AG04450 (cell line): ENCODE measurements at regions of chr7 and their contacts with region 1.

Region 1: DNA sequence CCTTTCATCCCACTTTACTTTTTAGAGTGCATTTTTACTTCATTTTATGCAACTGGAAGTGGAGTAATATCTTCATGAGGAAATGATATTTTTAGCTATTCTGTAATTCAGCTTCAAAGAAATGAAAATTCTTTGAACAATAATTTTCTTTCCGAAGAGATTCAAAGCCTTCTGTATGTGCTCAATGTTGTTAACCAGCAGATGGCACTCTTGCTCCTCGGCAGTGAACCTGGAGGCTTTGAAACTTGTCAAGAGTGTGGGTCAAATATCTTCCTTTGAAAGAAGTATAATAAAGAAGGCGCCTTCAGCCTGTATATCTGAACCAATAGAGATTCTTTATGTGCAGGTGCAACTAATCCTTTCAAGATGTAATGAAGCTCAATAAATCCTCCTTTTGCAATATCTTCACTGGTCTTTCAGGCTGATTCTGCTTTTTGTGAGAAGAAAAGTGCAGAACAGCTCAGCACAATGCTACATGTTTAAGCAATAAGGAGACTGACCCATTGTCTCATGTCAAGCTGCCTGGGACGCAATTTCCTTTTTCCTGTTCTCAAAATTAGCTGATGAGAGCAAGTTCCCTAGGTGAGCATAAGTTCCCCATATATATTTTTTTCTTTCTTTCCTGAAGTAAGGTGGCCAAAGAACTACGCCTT is 258.4 kb downstream of the SEMA3A start:
- DNase-seq: peak; percentile 53
- H3K4me3 ChIP-seq: no peak overlapping the region
- H3K27ac ChIP-seq: no peak overlapping the region
- H3K27me3 ChIP-seq: no peaks in the 10 kb centered on the region
- CTCF ChIP-seq: peak; percentile 98

Region 2: GRCh38 chr7:83925860-83926259 is 10.3 kb before region 1 on chr7:
- CTCF ChIA-PET with region 1: interaction called, 13 read pairs
- POLR2A ChIA-PET with region 1: no interaction called
- DNase-seq: no peak
- H3K4me3 ChIP-seq: no peak overlapping the region
- H3K27ac ChIP-seq: no peak overlapping the region
- H3K27me3 ChIP-seq: no peaks in the 10 kb centered on the region
- CTCF ChIP-seq: no peak

Region 3: GRCh38 chr7:83957333-83957732 is 21.2 kb after region 1 on chr7:
- CTCF ChIA-PET with region 1: interaction called, 26 read pairs
- POLR2A ChIA-PET with region 1: no interaction called
- DNase-seq: no peak
- H3K4me3 ChIP-seq: no peak overlapping the region
- H3K27ac ChIP-seq: no peak overlapping the region
- H3K27me3 ChIP-seq: no peaks in the 10 kb centered on the region
- CTCF ChIP-seq: no peak

Region 4: GRCh38 chr7:83976295-83976694 is 40.1 kb after region 1 on chr7:
- CTCF ChIA-PET with region 1: interaction called, 15 read pairs
- POLR2A ChIA-PET with region 1: no interaction called
- DNase-seq: no peak
- H3K4me3 ChIP-seq: no peak overlapping the region
- H3K27ac ChIP-seq: no peak overlapping the region
- H3K27me3 ChIP-seq: no peaks in the 10 kb centered on the region
- CTCF ChIP-seq: peak; percentile 56

Region 5: GRCh38 chr7:84017651-84018050 is 81.5 kb after region 1 on chr7:
- CTCF ChIA-PET with region 1: no interaction called
- POLR2A ChIA-PET with region 1: no interaction called
- DNase-seq: no peak
- H3K4me3 ChIP-seq: no peak overlapping the region
- H3K27ac ChIP-seq: no peak overlapping the region
- H3K27me3 ChIP-seq: no peaks in the 10 kb centered on the region
- CTCF ChIP-seq: no peak

Region 6: DNA sequence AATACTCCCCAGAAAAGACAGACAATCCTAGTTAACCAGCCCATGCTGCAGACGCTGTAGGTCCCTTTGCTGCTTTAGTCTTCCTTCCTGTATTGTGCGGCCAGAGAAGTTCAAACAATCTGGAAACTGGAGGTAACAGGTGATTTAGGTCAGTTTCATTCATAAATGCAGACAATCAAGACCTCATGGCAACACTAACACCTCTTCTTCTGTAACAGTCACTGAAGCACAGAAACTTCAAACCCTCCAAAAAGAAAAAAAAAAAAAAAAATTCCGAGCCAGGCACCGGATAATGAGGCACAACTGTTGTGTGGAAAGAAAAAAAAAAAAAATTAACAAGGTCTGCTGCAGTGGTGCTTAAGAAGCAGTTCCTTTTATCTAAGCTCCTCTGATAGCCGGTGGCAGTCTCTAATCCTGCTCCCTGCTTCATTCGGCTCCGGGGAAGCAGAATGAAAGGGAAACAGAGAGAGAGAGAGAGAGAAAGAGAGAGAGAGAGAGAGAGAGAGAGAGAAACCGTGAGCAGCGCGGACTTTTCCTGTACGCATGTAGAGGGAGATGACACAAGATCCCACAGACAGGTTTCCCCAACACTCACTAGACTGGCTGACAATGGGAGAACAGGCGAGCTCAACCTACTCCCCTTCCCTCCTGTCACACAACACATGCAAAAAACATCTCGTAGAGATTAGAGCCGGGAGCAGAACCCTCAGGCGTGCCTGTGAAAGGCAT is 258.5 kb after region 1 on chr7 and contains the start of gene SEMA3A:
- CTCF ChIA-PET with region 1: interaction called, 23 read pairs
- POLR2A ChIA-PET with region 1: no interaction called
- DNase-seq: peak; percentile 70
- H3K4me3 ChIP-seq: peak within 1 kb of the TSS; percentile 70
- H3K27ac ChIP-seq: peak within 1 kb of the TSS; percentile 76
- H3K27me3 ChIP-seq: no peaks in the 10 kb centered on the region
- CTCF ChIP-seq: peak; percentile 6; the same call in 1 of the 2 replicates
- polyA plus RNA-seq, gene SEMA3A: 61.9 and 80.2 TPM in 2 replicates

Region 7: DNA sequence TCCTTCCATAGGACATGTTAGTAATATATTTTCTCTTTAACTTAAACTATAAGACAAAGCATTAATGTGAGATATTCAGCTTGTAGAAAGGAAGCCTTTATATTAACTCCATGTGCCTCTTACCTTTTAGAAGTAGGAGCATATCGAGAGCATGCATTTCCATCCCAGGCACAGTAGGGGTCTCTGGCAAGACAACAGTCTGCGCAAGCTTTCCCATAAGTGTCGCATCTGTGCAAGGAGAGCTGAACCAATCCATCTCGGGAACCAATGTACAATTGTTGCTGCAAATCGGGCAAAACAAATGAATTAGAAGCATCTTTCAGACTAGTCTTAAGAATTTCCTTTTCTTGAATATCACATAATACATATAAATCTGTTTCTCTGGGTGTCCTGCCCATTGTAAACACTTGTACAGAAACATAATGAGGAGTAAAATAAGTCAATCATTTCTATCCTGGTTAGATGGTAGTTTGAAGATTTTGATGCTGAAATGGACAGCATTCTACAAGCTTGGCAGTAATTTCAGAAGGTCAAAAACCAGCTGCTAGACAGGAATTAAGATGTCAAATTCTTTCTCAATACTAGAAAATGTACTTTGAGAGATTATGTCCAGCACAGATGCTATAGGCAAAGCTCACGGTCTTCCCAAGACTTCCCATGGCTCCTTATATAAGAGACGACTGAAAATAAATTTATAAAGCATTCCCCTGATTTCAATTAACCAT is 1078.9 kb after region 1 on chr7:
- CTCF ChIA-PET with region 1: interaction called, 660 read pairs
- POLR2A ChIA-PET with region 1: no interaction called
- DNase-seq: no peak
- H3K4me3 ChIP-seq: no peak overlapping the region
- H3K27ac ChIP-seq: no peak overlapping the region
- H3K27me3 ChIP-seq: no peaks in the 10 kb centered on the region
- CTCF ChIP-seq: 0 out of 2 replicates have a peak, but pooled peaks have one; percentile 16

Region 8: GRCh38 chr7:85041605-85042216 is 1105.5 kb after region 1 on chr7:
- CTCF ChIA-PET with region 1: interaction called, 16 read pairs
- POLR2A ChIA-PET with region 1: no interaction called
- DNase-seq: peak; percentile 37
- H3K4me3 ChIP-seq: no peak overlapping the region
- H3K27ac ChIP-seq: no peak overlapping the region
- H3K27me3 ChIP-seq: no peaks in the 10 kb centered on the region
- CTCF ChIP-seq: peak; percentile 81

Region 9: GRCh38 chr7:85160223-85160622 is 1224.0 kb after region 1 on chr7:
- CTCF ChIA-PET with region 1: no interaction called
- POLR2A ChIA-PET with region 1: no interaction called
- DNase-seq: no peak
- H3K4me3 ChIP-seq: peak overlapping the region; percentile 37
- H3K27ac ChIP-seq: peak overlapping the region; percentile 48
- H3K27me3 ChIP-seq: no peaks in the 10 kb centered on the region
- CTCF ChIP-seq: no peak